GM18951 (cell line): ENCODE measurements at regions of chr16 and their contacts with region 1.

Region 1: DNA sequence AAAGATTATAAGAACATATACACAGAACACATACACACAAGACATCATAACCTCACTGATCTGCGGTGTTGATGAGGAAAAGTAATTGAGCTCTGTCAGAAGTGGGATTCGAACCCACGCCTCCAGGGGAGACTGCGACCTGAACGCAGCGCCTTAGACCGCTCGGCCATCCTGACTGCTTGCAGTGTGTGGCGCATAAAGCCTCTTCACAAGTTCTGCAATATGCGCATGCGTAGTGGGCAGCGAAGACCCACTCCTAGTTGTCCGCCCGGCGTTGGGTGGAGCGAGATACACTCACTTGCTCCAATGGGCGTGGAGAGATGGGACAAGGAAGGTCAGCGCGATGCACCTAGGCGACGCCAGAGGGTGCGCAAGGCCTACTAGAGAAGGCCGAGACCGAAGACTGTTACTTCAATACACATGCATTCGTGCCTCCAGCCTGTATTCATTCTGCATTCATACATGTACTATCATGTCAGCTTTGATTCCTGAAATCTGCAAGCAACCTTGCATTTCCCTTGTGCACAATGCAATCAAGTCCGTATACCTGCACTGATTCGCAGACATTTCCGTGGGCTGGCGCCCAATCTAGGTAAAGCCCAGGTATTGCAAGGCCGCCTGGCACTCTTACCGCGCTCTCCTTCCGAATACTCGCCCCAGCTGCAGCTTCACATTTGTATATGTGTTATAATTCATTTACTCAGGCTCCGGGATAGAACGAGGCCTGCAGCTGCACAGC is 16.1 kb upstream of the PLLP start:
- POLR2A ChIP-seq: no peak

Region 2: DNA sequence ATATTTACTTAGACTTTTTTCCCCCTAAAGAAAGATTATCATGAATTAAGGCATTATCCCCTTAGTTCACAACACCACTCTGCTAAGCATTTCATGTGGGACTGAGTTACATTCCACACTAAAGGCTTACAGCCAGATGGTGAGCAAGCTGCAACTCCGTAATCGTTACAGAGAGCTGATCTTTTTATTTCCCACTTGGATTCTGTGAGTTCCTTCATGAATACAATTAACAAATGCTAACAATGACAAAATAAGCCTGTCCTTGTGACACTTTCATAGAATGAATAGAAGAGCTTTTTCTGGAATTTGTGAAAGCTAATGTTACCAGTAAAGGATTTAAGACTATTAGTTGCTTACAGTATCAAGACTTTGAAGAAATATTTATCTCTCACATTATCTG is 840.5 kb before region 1 on chr16:
- in situ Hi-C with region 1: no loop called
- POLR2A ChIP-seq: no peak

Region 3: DNA sequence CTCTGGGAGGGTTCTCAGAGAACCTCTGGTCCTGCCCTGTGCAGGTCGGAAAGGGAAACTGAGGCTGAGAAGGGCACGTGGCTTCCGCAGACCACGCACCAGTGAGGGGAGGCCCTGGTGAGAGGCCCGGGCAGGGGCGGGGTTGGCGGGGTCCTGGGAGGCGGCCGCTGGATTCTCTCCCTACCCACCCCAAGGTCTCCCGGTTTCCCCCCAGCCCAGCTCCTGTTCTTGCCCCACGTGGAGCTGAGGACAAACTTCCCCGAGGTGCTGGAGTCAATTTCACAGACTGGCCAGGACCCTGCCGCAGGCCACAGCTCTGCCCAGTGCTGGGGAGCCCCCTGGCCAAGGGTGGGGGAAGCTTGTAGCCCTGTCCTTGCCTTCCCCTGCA is 115.6 kb after region 1 on chr16:
- in situ Hi-C with region 1: loop called (anchors 5 kb)
- POLR2A ChIP-seq: no peak

Region 4: GRCh38 chr16:57485916-57486857 is 185.6 kb after region 1 on chr16 and contains the start of gene DOK4:
- in situ Hi-C with region 1: no loop called
- POLR2A ChIP-seq: no peak